ENCODE measurements at regions of chr11 and their contacts with region 1.

Region 1: DNA sequence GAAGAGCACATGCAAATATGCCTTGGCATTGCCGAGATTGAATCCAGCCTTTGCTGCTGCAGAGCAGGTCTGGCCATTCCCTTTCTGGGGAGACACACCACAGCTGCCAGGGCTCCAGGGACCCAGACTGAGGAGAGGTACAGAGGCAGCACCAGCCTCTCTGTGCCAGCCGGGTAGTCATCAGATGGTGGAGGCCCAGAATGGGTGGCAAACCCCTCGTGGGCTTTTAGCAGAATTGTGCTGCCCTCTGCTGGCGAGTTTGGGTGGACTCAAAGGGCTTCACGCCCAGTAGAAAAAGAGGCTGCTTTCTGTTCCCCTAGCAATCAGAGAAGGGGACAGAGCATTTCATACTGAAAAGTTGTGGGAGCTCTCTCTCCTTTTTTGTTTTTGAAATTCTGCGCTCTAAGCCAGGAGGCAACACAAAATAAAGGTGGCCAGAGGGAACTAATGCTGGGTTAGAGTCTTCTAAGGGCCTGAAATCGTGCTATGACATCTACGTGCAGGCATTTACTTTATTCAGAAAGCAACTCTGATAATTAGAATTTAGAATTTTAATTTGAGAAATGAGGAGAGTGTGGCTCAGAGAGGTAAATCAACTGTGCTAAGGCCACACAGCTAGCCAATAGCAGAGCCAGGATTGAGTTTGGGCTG is 158.8 kb upstream of the NAV2 start:
- DNase-seq: peak; percentile 44 to 94
- H3K4me3 ChIP-seq: no peak overlapping the region
- H3K27ac ChIP-seq: no peak overlapping the region
- H3K4me1 ChIP-seq: peaks cover 0 to 8% (median 2%) of the 10 kb centered on the region in 4 experiments; a peak in 5 of 7 replicates
- H3K27me3 ChIP-seq: no peaks in the 10 kb centered on the region; a peak in 1 of 7 replicates
- CTCF ChIP-seq: peak; percentile 64 to 91 (median 85)
- EP300 ChIP-seq: no peak
- POLR2A ChIP-seq: no peak
- RAD21 ChIP-seq: peak; percentile 96 to 99

Region 2: DNA sequence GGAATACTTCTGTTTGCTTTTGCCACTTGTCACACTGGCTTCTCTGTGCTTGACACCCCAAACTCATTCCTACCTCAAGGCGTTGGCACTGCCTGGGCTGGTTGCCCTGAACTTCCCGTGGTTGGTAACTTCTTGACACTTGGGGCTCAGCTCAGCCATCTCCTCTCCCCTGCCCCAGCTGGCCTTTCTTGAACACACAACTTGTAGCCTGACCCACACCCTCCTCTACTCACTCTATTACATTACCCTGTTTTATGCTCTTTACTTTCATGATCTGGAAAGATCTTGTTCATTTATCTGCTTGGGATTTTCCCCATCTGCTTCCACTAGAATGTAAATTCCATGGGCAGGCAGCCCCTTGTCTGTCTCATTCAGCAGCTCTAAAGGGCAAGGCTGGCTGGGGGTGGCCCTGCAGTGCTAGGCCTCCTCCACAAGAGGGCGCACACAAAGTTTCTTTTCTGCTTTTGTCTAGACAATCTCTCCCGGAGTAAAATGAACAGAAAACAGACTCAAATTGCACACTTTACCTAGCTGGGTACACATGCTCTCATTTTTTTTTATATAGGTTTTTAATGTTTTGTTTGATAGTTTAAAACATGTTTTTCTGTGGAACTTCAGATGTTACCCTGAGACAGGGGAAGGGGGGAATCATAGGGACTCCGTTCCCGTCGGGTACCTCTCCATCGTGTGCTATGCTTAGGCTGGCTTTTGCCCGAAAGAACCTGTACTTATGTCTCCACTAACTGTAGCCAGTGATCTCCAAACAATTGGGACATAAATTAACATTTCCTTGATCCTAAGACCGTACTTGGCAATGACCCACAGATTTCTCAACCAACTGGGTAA is 476.8 kb before region 1 on chr11:
- CTCF ChIA-PET with region 1: interaction called, 26 read pairs
- POLR2A ChIA-PET with region 1: no interaction called
- DNase-seq: peak in 1 of 2 experiments; percentile 91
- H3K4me3 ChIP-seq: no peak overlapping the region
- H3K27ac ChIP-seq: no peak overlapping the region
- H3K4me1 ChIP-seq: peaks cover 2 to 8% (median 6%) of the 10 kb centered on the region in 4 experiments; a peak in 4 of 7 replicates
- H3K27me3 ChIP-seq: no peaks in the 10 kb centered on the region
- CTCF ChIP-seq: peak; percentile 71 to 91 (median 86)
- EP300 ChIP-seq: no peak
- POLR2A ChIP-seq: no peak
- RAD21 ChIP-seq: peak; percentile 60 to 72

Region 3: GRCh38 chr11:19276859-19277808 is 276.7 kb before region 1 on chr11:
- CTCF ChIA-PET with region 1: interaction called, 20 read pairs
- POLR2A ChIA-PET with region 1: no interaction called
- DNase-seq: no peak
- H3K4me3 ChIP-seq: no peak overlapping the region
- H3K27ac ChIP-seq: no peak overlapping the region
- H3K4me1 ChIP-seq: peaks cover 0 to 11% (median 6%) of the 10 kb centered on the region in 4 experiments; a peak in 3 of 7 replicates
- H3K27me3 ChIP-seq: no peaks in the 10 kb centered on the region
- CTCF ChIP-seq: no peak
- EP300 ChIP-seq: no peak
- POLR2A ChIP-seq: no peak
- RAD21 ChIP-seq: no peak

Region 4: DNA sequence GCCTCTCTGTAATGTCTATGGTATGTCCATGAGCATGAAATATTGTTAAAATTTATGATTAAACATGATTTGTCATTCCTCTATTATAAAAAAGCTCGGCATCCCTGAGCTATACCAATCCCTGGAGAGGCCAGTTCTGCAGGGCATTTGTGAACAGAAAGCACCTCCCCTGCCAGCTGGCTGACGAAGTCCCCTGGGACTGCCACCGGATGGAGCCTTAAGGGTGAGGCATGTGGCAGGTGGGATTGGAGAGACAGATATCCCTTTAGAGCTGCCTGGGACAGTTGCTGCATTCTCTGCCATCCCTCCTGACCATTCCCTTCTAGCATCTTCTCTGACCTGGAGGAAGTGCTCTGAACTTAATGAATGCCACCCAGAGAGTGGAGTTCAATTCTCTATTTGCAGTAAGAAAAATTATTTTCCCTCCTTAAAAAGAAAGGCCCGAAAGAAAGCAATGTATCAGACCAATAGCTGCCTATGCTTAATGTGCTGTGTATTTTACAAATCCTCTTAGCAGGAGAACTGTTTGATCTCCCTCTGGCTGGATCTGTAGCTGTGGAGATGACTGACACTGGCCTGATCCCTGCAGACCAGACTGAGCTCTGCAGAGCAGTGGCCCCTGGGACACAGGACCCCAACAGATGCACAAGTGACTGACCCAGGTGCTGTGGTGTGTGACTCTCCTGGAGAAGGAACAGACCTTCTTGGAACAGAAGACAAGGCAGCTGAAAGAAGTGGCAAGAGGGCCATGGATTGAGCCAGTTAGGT is 60.2 kb before region 1 on chr11:
- CTCF ChIA-PET with region 1: interaction called, 42 read pairs
- POLR2A ChIA-PET with region 1: no interaction called
- DNase-seq: no peak
- H3K4me3 ChIP-seq: no peak overlapping the region
- H3K27ac ChIP-seq: no peak overlapping the region
- H3K4me1 ChIP-seq: no peaks in the 10 kb centered on the region
- H3K27me3 ChIP-seq: no peaks in the 10 kb centered on the region; a peak in 1 of 7 replicates
- CTCF ChIP-seq: peak; percentile 27 to 41 (median 27)
- EP300 ChIP-seq: no peak
- POLR2A ChIP-seq: no peak
- RAD21 ChIP-seq: peak; percentile 41 to 60

Region 5: GRCh38 chr11:19536131-19536530 is 17.7 kb before region 1 on chr11:
- CTCF ChIA-PET with region 1: interaction called, 13 read pairs
- POLR2A ChIA-PET with region 1: no interaction called
- DNase-seq: no peak
- H3K4me3 ChIP-seq: no peak overlapping the region
- H3K27ac ChIP-seq: no peak overlapping the region
- H3K4me1 ChIP-seq: peaks cover 0 to 3% (median 0%) of the 10 kb centered on the region in 4 experiments; a peak in 4 of 7 replicates
- H3K27me3 ChIP-seq: no peaks in the 10 kb centered on the region
- CTCF ChIP-seq: no peak
- EP300 ChIP-seq: no peak
- POLR2A ChIP-seq: no peak
- RAD21 ChIP-seq: no peak

Region 6: GRCh38 chr11:19777377-19778102 is 223.7 kb after region 1 on chr11:
- CTCF ChIA-PET with region 1: interaction called, 10 read pairs
- POLR2A ChIA-PET with region 1: no interaction called
- DNase-seq: no peak
- H3K4me3 ChIP-seq: peak overlapping the region; percentile 84 to 96 (median 90)
- H3K27ac ChIP-seq: peak overlapping the region; percentile 92
- H3K4me1 ChIP-seq: peaks cover 17 to 43% (median 37%) of the 10 kb centered on the region in 4 experiments
- H3K27me3 ChIP-seq: no peaks in the 10 kb centered on the region
- CTCF ChIP-seq: no peak
- EP300 ChIP-seq: peak in 1 of 2 experiments; percentile 7; a peak in 1 of 3 replicates
- POLR2A ChIP-seq: peak; percentile 78 to 81
- RAD21 ChIP-seq: no peak

Measured in H1 (cell line).